Activated CD8-positive, alpha-beta T cell treated with anti-CD3 and anti-CD28 coated beads, Interleukin-2, amount 10 ng/mL, durations not matched to agents 7 days and 5 days (primary cell): ENCODE measurements at regions of chr1 and their contacts with region 1.

Region 1: DNA sequence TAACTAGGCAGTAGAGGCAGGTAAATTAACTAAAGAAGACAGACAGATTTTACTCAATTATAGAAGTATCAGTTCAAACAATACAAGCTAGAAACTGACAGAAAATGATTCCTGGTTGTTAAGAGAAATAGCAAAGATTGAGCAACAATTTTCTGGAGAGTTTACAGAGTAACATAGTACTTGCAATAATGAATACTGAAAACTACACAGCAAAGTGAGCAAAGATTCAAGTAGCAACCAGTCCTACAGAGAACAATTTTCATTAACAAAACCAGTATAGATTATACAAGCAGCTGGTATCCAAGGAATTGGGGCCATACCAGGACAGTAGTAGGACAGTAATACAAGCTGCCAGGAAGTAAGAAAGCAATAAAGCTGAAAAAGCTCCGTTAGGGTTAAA is 37.6 kb downstream of the EYA3 start:
- DNase-seq: no peak
- ATAC-seq: no peak
- H3K4me3 Mint-ChIP-seq: no peak overlapping the region
- H3K27ac Mint-ChIP-seq: no peak overlapping the region
- H3K4me1 Mint-ChIP-seq: peaks cover 10% of the 10 kb centered on the region
- H3K27me3 Mint-ChIP-seq: no peaks in the 10 kb centered on the region

Region 2: DNA sequence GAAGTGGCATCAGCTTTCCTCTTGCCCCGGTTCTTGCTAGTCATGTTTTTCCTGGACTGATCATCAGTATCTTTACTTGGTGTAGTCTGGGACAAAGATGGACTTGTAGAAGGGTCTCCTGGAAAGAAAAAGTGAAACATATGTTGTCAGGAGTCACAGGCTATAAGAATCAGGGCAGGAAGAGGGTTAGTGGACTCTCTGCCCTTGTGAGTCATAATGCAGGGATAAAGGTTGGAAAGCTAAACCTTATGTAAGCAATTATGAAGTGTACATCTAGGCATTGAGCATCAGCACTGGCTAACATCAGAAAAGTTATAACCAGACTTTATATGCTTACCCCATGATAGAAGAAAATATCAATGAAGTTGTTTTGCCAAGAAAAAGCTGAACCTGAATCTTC is 39.8 kb before region 1 on chr1:
- CTCF ChIA-PET with region 1: no interaction called
- POLR2A ChIA-PET with region 1: no interaction called
- DNase-seq: no peak
- ATAC-seq: no peak
- H3K4me3 Mint-ChIP-seq: no peak overlapping the region
- H3K27ac Mint-ChIP-seq: no peak overlapping the region
- H3K4me1 Mint-ChIP-seq: no peaks in the 10 kb centered on the region
- H3K27me3 Mint-ChIP-seq: no peaks in the 10 kb centered on the region

Region 3: DNA sequence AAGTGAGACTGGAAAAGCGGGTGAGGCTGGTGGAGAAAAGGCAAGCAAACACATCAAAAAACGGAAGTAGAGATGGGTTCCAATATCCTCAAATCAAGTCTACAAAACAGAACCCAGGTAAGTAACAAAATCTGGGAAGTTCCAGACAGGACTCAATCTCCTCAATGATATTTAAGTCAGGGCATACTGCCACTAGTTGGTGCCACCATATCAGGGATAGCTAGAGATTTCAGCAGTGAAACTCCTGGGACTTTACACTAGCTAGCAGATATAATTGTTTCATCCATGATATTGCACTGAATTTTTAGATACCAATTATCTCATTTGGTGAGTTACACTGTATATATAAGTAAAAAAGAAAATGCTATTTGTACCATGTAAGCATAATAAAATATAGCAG is 14.3 kb before region 1 on chr1:
- CTCF ChIA-PET with region 1: interaction called, 12 read pairs
- POLR2A ChIA-PET with region 1: no interaction called
- DNase-seq: no peak
- ATAC-seq: no peak
- H3K4me3 Mint-ChIP-seq: no peak overlapping the region
- H3K27ac Mint-ChIP-seq: no peak overlapping the region
- H3K4me1 Mint-ChIP-seq: no peaks in the 10 kb centered on the region
- H3K27me3 Mint-ChIP-seq: no peaks in the 10 kb centered on the region

Region 4: DNA sequence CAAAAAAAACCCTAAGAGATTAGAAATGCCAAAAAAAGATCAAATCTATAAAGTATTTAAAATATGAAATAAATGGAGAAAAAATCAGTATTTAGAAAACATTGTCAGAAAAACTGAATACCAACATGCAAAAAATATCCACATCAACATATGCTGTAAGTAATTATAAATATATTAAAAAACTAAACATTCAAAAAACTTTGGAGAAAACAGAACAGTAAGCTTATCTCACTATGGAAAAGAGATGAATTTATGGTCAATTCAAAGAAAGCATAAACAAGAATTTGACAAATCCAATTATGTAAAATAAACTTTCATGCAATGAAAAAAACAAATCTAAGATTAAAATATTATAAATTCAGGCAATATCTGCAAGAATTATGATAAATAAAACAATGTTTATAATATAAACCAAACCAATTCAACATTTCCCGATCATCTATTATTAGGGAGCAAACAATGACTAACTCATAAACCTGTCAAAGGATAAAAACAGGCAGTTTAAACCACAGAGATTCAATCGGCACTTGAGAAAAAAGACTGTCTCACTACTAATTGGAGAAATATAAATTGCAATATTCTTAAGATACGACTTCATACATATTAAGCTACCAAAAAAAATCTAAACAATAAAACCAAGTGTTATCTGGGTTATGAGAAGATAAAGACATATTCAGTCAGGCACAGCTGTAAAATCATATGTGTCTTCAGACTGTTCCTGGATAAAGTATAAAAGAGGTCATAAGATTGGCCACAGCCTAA is 15.8 kb after region 1 on chr1:
- CTCF ChIA-PET with region 1: no interaction called
- POLR2A ChIA-PET with region 1: no interaction called
- DNase-seq: no peak
- ATAC-seq: no peak
- H3K4me3 Mint-ChIP-seq: no peak overlapping the region
- H3K27ac Mint-ChIP-seq: no peak overlapping the region
- H3K4me1 Mint-ChIP-seq: peaks cover 9% of the 10 kb centered on the region
- H3K27me3 Mint-ChIP-seq: no peaks in the 10 kb centered on the region